HCT116 (cell line): ENCODE measurements at regions of chr1 and their contacts with region 1.

Region 1: DNA sequence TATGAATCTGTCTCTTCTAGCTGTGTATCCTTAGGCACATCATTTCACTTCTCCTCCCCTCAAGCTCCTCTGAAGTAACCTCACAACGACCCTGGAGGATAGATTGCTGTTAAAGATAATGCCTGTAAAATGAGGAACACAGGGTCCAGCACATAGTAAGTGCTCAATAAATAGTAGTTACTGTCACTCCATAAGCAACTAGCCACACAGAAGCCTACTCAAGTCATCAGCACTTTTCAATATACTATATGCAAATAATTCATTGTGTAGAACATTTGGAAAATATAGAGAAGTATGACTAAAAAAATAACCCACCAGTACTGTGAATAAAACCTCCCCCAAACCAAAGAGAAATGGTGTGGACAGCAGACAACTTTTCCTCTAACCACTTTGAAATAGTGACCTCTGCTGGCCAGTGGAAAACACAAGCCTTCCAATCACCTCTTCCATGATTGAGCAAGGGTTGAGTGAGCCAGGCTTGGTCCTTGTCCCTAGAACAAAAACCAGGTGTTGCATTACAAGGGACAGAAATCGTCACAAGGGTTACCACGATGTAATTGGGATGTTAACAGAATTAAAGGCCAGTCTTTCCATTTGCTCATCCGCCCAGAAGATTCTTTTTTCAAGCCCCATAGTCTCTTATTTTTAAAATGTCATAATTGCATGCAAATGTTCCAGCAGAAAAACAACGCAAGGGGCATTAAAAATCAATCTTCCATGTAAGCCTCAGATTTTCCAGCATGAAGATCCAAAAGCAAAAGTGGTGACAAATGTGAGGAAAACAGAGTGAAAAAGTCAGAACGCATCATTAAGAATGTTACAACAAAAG is 15.7 kb upstream of the GLIS1 start:
- DNase-seq: peak; percentile 32
- ATAC-seq: peak; percentile 73
- H3K4me3 ChIP-seq: no peak overlapping the region
- H3K27ac ChIP-seq: no peak overlapping the region
- H3K4me1 ChIP-seq: no peaks in the 10 kb centered on the region
- H3K27me3 ChIP-seq: no peaks in the 10 kb centered on the region
- CTCF ChIP-seq: peak; percentile 64 to 82 (median 70); a peak in 5 of 6 replicates
- POLR2A ChIP-seq: no peak
- RAD21 ChIP-seq: peak; percentile 71

Region 2: DNA sequence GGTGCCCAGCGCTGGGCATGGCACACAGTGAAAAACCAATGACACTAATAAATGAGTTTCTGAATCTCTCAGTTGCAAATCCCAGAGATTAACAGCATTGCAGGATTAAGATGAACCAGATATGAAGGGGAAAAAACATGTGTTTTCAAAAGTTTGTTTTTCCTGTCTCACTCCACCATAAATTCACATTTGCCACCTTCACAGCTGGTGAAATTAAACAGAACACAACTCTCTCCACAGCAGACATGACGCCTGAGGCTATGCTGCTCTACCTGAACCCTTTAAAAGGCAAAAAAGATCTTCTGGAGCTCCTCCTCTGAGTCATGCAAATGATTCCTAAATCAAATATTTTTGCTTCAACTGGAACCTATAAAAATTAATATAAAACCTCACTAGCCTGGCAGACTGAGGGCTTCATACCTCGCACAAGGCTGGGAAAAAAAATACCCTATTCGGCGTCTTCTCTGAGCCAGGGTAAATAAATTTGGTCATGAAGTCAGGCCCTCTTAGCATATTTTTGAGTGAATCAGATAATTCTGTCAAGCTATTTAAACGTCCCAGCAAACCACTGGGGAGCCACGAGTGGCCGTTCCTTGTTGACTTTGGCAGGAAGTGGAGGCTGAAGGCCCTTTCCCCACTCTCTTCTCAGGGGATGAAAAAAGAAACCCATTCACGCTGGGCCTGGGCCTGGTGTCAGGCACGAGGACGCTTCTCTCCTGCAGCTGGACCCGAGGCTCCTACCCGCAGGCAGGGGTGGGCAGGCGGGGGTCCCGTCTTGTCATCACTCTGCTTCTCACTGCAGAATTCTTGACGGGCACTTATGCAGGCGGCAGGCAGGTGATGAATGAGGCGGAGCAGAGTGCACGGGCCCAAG is 242.5 kb before region 1 on chr1:
- CTCF ChIA-PET with region 1: no interaction called
- POLR2A ChIA-PET with region 1: no interaction called
- RAD21 ChIA-PET with region 1: no interaction called
- intact Hi-C with region 1: no loop called
- DNase-seq: no peak
- ATAC-seq: no peak
- H3K4me3 ChIP-seq: no peak overlapping the region
- H3K27ac ChIP-seq: no peak overlapping the region
- H3K4me1 ChIP-seq: peaks cover 0 to 7% of the 10 kb centered on the region in 2 experiments; a peak in 2 of 4 replicates
- H3K27me3 ChIP-seq: no peaks in the 10 kb centered on the region
- CTCF ChIP-seq: no peak
- POLR2A ChIP-seq: no peak
- RAD21 ChIP-seq: no peak

Region 3: GRCh38 chr1:53715478-53715877 is 39.2 kb before region 1 on chr1:
- CTCF ChIA-PET with region 1: no interaction called
- POLR2A ChIA-PET with region 1: no interaction called
- RAD21 ChIA-PET with region 1: no interaction called
- intact Hi-C with region 1: loop called (anchors 2 kb)
- DNase-seq: no peak
- ATAC-seq: peak; percentile 99
- H3K4me3 ChIP-seq: no peak overlapping the region
- H3K27ac ChIP-seq: no peak overlapping the region
- H3K4me1 ChIP-seq: no peaks in the 10 kb centered on the region
- H3K27me3 ChIP-seq: peaks cover 13% of the 10 kb centered on the region; the same call in 1 of the 2 replicates
- CTCF ChIP-seq: peak; percentile 29 to 70 (median 66); a peak in 5 of 6 replicates
- POLR2A ChIP-seq: no peak
- RAD21 ChIP-seq: peak; percentile 51